Activated CD4-positive, alpha-beta T cell treated with anti-CD3 and anti-CD28 coated beads, Interleukin-2, amount 10 ng/mL, durations not matched to agents 7 days and 5 days (primary cell): ENCODE measurements at regions of chr1 and their contacts with region 1.

Region 1: DNA sequence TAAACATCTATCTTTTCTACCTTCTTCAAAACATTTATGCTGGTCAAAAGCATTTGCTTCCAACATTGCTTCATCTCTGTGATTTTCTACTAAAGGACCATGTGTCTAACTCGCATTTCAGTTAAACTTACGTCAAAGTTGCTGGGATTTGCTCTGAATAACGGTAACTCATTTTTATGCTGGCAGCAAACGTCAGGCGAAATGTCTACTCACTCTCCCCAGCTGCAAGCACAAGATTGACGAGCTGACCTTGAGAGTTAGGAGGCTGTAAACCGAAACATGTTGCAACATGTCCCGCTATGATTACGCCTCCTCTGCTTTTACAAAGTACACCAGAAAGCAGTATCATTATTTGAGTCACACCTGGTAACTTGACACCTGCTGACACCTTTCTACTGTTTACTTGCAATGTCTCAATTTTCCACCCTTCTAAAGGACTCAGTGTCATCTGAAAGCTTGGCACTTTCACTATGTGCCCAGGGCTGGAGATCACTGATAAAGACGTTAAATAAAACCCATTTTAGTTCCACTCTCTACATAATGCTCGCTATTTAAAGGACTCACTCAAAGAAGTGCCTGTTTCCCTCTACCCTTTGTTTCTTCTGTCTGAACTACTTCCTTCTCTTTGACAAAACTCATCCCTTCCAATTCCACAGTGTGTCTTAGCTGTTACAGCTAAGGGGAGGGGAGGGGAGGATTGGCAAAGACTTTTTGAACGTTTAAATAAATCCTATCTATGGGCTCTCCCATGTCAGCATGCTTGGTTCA is 111.9 kb downstream of the PTPN14 start:
- DNase-seq: peak; percentile 41
- H3K4me3 Mint-ChIP-seq: peak overlapping the region; percentile 63
- H3K27ac Mint-ChIP-seq: peak overlapping the region; percentile 87
- H3K4me1 Mint-ChIP-seq: peaks cover 57% of the 10 kb centered on the region
- H3K27me3 Mint-ChIP-seq: no peaks in the 10 kb centered on the region

Region 2: DNA sequence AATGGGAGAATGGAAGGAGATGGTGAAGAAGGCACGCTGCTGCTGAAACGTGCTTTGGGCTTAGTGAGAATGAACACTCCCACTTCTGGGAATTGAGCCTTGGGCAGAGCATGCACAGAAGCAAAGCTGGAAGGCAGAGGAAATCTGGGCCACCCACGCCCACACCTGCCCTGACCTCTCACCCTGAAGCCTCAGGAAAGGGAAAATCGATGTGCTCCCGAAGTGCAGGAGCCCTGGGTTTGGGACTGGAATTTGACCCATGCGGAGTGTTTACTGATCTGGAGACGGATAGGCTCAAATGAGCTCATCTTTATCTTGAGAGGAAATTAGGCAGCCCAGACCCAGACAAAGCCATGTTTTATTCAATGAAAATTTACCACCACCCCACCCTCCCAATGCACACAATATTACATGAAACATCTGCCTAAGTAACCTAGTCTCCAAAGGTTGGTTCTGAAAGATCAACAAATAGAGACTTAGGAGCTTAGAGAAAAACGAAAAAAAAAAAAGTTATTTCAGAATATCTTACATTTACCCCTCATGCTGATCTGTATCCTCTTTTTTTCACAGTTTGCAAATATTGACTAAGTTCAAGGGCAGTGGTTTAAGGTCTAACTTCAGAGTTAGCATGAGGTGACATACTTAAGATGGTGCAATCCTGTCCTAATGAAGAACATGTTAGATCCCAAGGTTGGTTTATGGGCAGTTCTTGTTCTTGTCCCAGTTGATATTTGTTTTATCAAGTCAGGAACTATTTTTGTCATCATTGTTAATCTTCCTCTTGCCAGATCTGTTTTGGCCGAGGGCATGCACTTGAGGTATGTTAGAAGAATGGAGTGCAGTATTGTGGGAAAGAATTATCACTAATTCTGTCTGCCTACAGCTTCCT is 388.8 kb before region 1 on chr1:
- CTCF ChIA-PET with region 1: no interaction called
- POLR2A ChIA-PET with region 1: no interaction called
- DNase-seq: no peak
- H3K4me3 Mint-ChIP-seq: no peak overlapping the region
- H3K27ac Mint-ChIP-seq: no peak overlapping the region
- H3K4me1 Mint-ChIP-seq: no peaks in the 10 kb centered on the region
- H3K27me3 Mint-ChIP-seq: no peaks in the 10 kb centered on the region

Region 3: GRCh38 chr1:214452152-214452784 is 12.7 kb after region 1 on chr1:
- CTCF ChIA-PET with region 1: interaction called, 13 read pairs
- POLR2A ChIA-PET with region 1: no interaction called
- DNase-seq: no peak
- H3K4me3 Mint-ChIP-seq: no peak overlapping the region
- H3K27ac Mint-ChIP-seq: no peak overlapping the region
- H3K4me1 Mint-ChIP-seq: peaks cover 13% of the 10 kb centered on the region
- H3K27me3 Mint-ChIP-seq: no peaks in the 10 kb centered on the region